Activated T-helper 2 cell treated with anti-CD3 and anti-CD28 coated beads, Interferon-gamma antibody, Interleukin-2, Interleukin-4, amounts not matched to agents 10 μg/mL and 5 μg/mL and 100 μg/mL, durations not matched to agents 14 hours and 24 hours and 36 hours (primary cell): ENCODE measurements at regions of chr6 and their contacts with region 1.

Region 1: DNA sequence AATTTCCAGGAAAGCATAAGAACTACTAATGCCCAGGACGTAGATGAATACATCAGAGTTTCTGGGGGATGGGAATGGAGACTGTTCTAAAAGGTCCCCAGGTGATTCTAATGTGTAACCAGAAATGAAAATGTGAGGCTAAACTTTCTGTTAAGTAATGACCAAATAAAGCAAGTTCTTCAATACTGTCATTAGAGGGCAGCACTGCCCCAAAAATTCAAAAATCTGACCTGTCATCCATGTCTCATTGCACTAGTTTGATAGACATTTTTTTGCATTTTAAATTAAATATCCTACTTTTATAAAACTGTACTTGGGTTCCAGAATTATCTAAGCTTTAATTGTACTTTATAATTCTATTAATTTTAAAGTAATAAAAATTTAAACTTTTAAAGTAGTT is 94.9 kb downstream of the RFX6 start:
- DNase-seq: no peak
- H3K4me3 Mint-ChIP-seq: no peak overlapping the region
- H3K27ac Mint-ChIP-seq: no peak overlapping the region
- H3K4me1 Mint-ChIP-seq: no peaks in the 10 kb centered on the region
- H3K27me3 Mint-ChIP-seq: peaks cover 5% of the 10 kb centered on the region

Region 2: DNA sequence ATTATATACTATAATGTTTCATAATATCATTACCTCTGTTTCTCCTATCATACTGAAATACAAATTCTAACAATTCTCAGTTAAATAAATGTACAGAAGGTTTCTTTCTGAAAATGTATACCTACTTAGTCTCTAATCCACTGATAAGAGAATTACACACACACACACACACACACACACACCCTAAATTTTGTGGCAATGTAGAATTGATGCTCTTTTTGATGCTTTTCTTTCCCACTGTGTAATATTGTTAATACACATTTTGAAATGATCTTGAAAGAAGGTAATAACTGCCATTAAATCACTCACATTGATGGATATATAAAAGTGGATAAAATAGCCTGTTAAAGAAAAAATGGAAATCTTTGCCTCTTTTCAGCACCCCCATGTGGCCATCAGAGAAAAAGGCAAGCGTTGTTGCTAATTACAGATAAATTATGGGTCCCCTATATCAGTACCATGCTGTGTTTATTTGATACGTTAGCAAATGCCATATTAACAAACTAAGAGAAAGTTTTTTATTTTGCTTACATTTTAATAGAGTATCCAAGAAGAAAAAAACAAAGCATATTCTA is 216.8 kb after region 1 on chr6:
- intact Hi-C with region 1: loop called (anchors 5 kb)
- DNase-seq: no peak
- H3K4me3 Mint-ChIP-seq: no peak overlapping the region
- H3K27ac Mint-ChIP-seq: no peak overlapping the region
- H3K4me1 Mint-ChIP-seq: no peaks in the 10 kb centered on the region
- H3K27me3 Mint-ChIP-seq: no peaks in the 10 kb centered on the region

Region 3: GRCh38 chr6:118618679-118619377 is 1646.9 kb after region 1 on chr6:
- intact Hi-C with region 1: no loop called
- DNase-seq: peak; percentile 34
- H3K4me3 Mint-ChIP-seq: no peak overlapping the region
- H3K27ac Mint-ChIP-seq: no peak overlapping the region
- H3K4me1 Mint-ChIP-seq: peaks cover 14% of the 10 kb centered on the region
- H3K27me3 Mint-ChIP-seq: no peaks in the 10 kb centered on the region